A549 (cell line): ENCODE measurements at regions of chr17 and their contacts with region 1.

Region 1: DNA sequence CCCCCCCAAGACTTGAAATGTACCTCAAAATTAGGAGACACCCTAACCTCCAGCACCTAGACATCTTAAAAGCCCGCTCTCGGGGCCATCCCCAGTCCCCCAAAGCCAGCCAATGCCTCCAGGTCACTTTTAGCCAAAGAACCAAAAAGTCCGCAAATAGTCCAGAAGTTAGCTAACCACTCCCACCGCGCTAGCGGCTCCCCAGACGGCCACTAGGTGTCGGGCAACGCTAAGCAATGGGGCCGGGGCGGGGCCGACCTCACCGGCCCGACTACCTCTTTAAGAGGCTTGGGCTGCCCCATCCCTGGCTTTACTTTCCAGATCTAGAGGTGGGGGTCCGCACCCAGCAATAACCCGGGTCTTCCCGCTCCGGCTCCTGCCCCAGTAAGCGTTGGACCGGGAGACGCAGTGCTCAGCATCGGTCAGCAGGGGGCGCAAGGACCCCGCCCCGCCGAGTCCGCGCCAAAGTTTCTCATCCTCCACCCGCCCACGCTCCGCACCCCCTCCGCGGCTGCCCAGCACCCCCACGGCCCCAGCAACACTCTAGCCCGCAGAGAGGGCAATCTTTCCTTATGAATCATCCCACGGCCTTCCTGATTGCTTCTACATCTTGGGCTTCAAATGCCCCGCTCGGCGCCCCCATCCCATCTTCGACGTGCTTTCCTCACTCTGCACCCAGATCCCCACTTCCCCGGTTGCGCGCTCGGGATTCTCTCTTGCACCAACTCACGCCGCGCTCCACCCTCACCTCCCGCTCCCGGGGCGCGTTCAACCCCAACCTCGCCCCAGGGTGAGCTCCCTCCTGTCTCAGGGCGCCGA is 765 bp downstream of the COL1A1 start:
- DNase-seq: peak; percentile 90 to 95
- ATAC-seq: peak; percentile 74 to 86
- H3K4me3 ChIP-seq: peak overlapping the region; percentile 47
- H3K27ac ChIP-seq: peak overlapping the region; percentile 77 to 90
- H3K4me1 ChIP-seq: peaks cover 44% of the 10 kb centered on the region
- CTCF ChIP-seq: peak; percentile 100
- EP300 ChIP-seq: no peak
- POLR2A ChIP-seq: no peak
- RAD21 ChIP-seq: peak; percentile 94 to 100

Region 2: GRCh38 chr17:50020841-50021599 is 179.6 kb before region 1 on chr17:
- CTCF ChIA-PET with region 1: no interaction called
- POLR2A ChIA-PET with region 1: no interaction called
- DNase-seq: no peak
- ATAC-seq: 0 out of 6 replicates have a peak, but pooled peaks of 1 of the 2 experiments have one; percentile 40
- H3K4me3 ChIP-seq: no peak overlapping the region
- H3K27ac ChIP-seq: no peak overlapping the region
- H3K4me1 ChIP-seq: peaks cover under 1% of the 10 kb centered on the region; the same call in 1 of the 3 replicates
- CTCF ChIP-seq: no peak
- EP300 ChIP-seq: no peak
- POLR2A ChIP-seq: no peak
- RAD21 ChIP-seq: no peak

Region 3: GRCh38 chr17:50139950-50140871 is 60.5 kb before region 1 on chr17:
- CTCF ChIA-PET with region 1: interaction called, 10 read pairs
- POLR2A ChIA-PET with region 1: no interaction called
- DNase-seq: peak; percentile 89 to 91
- ATAC-seq: peak; percentile 66 to 89
- H3K4me3 ChIP-seq: no peak overlapping the region
- H3K27ac ChIP-seq: no peak overlapping the region
- H3K4me1 ChIP-seq: peaks cover 18% of the 10 kb centered on the region
- CTCF ChIP-seq: peak; percentile 90
- EP300 ChIP-seq: no peak
- POLR2A ChIP-seq: no peak
- RAD21 ChIP-seq: peak; percentile 62 to 69; a peak in 4 of 5 replicates

Region 4: DNA sequence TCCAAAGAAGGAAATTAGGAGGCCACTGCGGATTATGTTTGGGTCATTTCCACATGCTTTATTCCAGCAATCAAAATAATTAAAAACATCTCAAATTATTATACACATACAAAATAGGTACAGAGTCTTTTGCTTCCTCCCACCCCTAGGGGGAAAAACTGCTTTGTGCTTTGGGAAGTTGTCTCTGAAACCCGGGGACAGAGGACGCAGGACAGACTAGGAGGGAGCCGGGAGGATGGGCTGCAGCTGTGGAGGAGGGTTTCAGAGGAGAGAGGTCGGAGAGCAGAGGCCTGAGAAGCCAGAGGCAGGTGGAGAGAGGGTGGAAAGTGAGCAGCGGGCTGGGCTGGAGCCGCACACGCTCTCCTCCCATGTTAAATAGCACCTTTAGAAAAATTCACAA is 16.6 kb before region 1 on chr17:
- CTCF ChIA-PET with region 1: interaction called, 817 read pairs
- POLR2A ChIA-PET with region 1: no interaction called
- DNase-seq: no peak
- ATAC-seq: peak in 1 of 2 experiments; percentile 27; a peak in 3 of 6 replicates
- H3K4me3 ChIP-seq: no peak overlapping the region
- H3K27ac ChIP-seq: peak overlapping the region; percentile 37 to 67; a peak in 4 of 6 replicates
- H3K4me1 ChIP-seq: peaks cover 23% of the 10 kb centered on the region
- CTCF ChIP-seq: no peak
- EP300 ChIP-seq: no peak
- POLR2A ChIP-seq: no peak
- RAD21 ChIP-seq: no peak

Region 5: GRCh38 chr17:50238601-50239280 is 38.1 kb after region 1 on chr17:
- CTCF ChIA-PET with region 1: interaction called, 19 read pairs
- POLR2A ChIA-PET with region 1: no interaction called
- DNase-seq: peak in 1 of 2 experiments; percentile 59
- ATAC-seq: peak; percentile 98 to 99
- H3K4me3 ChIP-seq: no peak overlapping the region
- H3K27ac ChIP-seq: no peak overlapping the region
- H3K4me1 ChIP-seq: peaks cover 8% of the 10 kb centered on the region
- CTCF ChIP-seq: no peak
- EP300 ChIP-seq: no peak
- POLR2A ChIP-seq: no peak
- RAD21 ChIP-seq: no peak

Region 6: DNA sequence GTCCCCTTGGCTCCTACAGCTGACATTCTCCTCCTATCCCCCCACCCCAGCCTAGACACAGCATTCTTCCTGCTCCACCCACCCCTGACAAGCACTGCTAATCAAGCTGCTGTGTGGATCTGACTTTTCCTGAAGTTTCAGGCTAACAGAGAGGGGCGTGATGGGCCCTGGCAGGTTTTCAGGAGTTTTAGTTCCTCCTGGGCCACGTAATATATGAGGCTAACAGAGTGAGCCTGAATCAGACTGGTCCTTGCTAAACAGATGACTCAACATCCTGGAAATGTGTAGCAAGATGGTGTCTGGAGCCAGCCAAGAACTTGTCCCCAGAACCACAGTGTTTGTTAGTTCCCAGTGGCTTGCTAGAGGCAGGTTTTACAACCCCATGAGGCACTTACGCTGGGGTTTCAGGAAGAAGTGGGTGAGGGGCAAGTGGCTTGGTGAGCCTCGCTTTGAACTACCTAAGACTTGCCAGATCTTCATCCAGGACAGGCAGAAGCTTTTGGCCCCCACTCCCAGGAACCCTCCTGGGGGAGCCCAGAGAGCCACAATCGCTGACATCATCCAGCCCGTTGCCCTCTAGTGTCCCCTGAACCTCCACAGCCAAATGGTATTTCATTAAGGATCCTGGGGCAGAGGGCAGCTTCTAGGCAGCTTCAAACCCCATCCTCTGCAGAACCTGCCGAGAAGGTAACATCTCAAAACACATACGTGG is 89.5 kb after region 1 on chr17:
- CTCF ChIA-PET with region 1: interaction called, 935 read pairs
- POLR2A ChIA-PET with region 1: interaction called, 3 read pairs
- DNase-seq: peak; percentile 87
- ATAC-seq: peak; percentile 95
- H3K4me3 ChIP-seq: peak overlapping the region; percentile 23; the same call in 2 of the 3 replicates
- H3K27ac ChIP-seq: peak overlapping the region; percentile 85 to 91
- H3K4me1 ChIP-seq: peaks cover 28% of the 10 kb centered on the region
- CTCF ChIP-seq: no peak
- EP300 ChIP-seq: no peak
- POLR2A ChIP-seq: no peak
- RAD21 ChIP-seq: no peak

Region 7: DNA sequence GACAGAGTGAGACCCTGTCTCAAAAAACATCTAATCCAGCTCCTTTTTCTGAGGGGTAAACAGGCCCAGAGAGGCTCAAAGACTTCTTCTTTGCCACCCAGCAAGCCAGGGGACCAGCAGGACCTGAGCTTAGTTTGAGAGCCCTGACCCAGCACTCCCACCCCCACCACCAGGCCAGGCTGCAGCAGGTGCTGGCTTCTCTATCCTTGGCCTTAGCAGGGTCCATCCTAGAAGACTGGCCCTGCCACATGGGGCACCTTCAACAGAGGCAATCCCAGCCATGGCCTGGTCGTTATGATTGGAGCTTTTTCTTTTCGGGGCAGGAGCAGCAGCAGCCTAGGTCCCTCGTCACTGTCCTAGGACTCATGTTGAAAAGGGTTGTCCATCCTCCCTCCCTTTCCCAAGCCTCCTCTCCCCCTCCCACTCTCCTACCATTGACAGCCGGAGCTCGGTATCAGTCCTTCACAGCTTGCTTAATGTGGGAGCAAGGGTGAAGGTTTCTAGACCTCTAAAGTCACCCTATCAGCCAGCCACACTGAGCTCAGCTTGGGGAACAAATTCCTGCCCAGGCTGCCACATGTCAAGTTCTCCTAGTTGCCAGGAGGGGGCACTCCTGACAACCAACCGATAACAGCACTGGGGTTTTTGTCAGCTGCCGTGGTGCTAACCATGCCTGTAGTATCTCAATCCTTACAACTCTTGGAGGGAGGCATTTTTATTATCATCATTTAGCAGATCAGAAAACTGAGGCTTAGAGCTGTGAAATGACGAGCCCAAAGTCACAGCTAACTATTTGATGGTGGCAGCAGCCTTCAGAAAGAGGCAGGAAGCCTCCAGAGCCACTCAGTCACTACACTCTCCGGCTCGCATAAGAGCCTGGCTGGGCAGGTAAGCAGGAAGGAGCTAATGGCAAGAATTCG is 161.2 kb after region 1 on chr17:
- CTCF ChIA-PET with region 1: interaction called, 20 read pairs
- POLR2A ChIA-PET with region 1: no interaction called
- DNase-seq: peak; percentile 80 to 93
- ATAC-seq: peak; percentile 67 to 81
- H3K4me3 ChIP-seq: no peak overlapping the region
- H3K27ac ChIP-seq: no peak overlapping the region
- H3K4me1 ChIP-seq: peaks cover 3% of the 10 kb centered on the region; the same call in 1 of the 3 replicates
- CTCF ChIP-seq: peak; percentile 71
- EP300 ChIP-seq: no peak
- POLR2A ChIP-seq: no peak
- RAD21 ChIP-seq: peak; percentile 42 to 65; a peak in 4 of 5 replicates